Left cardiac atrium (tissue), 4 donors: ENCODE measurements at regions of chr19 and their contacts with region 1.

Region 1: GRCh38 chr19:5048091-5048726 is 79.3 kb downstream of the KDM4B start:
- DNase-seq: peak; percentile 86
- ATAC-seq: peak; percentile 84 to 90

Region 2: GRCh38 chr19:5143471-5144411 is 95.5 kb after region 1 on chr19:
- intact Hi-C with region 1: loop called in 1 of 2 experiments (anchors 5 kb)
- DNase-seq: peak; percentile 37
- ATAC-seq: peak; percentile 12 to 58

Region 3: GRCh38 chr19:5577785-5578493 is 529.7 kb after region 1 on chr19:
- intact Hi-C with region 1: loop called (anchors 5 to 10 kb)
- DNase-seq: peak; percentile 71
- ATAC-seq: peak; percentile 87

Region 4: DNA sequence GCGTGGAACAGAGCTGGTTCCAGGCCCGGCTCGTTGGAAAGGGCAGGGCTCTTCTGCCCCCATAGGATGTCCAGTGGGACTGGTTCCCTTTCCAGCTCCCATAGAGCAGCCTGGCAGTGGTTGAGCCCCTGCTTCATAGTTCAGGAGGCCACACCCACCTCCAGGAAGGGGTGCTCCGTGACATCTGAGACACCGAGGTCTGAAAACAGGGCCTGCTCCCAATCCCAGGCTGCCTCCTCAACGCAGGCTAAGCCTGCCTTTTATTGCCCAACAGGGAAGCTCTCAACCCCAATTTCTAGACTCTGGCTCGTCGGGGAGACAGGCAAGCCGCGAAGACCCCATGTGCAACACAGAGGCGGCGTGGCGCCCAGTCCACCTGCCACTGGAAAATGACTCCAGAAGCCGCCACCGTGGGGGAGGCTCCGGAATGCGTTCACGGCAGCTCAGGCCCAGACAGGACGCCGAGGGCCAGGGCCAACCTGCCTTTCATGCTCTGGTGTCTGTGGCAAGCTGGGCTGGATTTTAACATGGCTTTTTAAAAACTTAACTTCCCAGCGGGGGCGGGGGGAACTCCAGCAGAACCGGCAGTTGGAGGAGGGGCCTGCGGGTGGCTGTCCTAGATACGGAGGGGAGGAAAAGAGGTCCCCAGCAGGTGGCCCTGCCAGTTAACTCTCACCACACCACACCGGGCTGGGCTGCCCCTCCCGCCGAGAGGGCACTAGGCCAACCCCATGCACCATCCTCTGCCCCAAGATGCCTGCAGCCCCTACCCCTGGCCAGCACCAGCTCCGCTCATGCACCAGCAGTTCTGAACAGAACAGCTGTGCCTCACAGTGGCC is 537.5 kb after region 1 on chr19:
- intact Hi-C with region 1: loop called in 1 of 2 experiments (anchors 10 kb)
- DNase-seq: peak; percentile 50
- ATAC-seq: peak; percentile 32 to 42